Psoas muscle (tissue), 8 donors: ENCODE measurements at regions of chr11 and their contacts with region 1.

Region 1: DNA sequence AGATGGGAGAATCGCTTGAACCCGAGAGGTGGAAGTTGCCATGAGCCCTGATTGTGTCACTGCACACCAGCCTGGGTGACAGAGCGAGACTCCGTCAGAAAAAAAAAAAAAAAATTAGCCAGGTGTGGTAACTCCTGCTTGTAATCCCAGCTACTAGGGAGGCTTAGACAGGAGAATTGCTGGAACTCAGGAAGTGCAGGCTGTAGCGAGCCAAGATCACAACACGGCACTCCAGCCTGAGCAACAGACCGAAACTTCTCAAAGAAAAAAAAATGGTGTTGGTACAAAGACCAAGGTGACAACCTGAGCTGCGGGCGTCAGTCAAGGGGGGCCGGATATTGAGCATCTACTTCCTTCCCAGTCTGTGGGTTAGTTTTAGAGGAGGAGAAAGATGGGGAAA is 48.4 kb upstream of the HSPA8 start:
- DNase-seq: no peak
- ATAC-seq: no peak
- H3K4me3 ChIP-seq: no peak overlapping the region
- H3K27ac ChIP-seq: no peak overlapping the region
- H3K4me1 ChIP-seq: peaks cover 3% of the 10 kb centered on the region
- H3K27me3 ChIP-seq: no peaks in the 10 kb centered on the region
- CTCF ChIP-seq: no peak

Region 2: GRCh38 chr11:123145220-123145619 is 34.9 kb after region 1 on chr11:
- intact Hi-C with region 1: no loop called
- DNase-seq: peak; percentile 35 to 58
- ATAC-seq: peak; percentile 95 to 99 (median 97)
- H3K4me3 ChIP-seq: peak overlapping the region; percentile 31
- H3K27ac ChIP-seq: no peak overlapping the region
- H3K4me1 ChIP-seq: peaks cover 6% of the 10 kb centered on the region
- H3K27me3 ChIP-seq: no peaks in the 10 kb centered on the region
- CTCF ChIP-seq: no peak

Region 3: DNA sequence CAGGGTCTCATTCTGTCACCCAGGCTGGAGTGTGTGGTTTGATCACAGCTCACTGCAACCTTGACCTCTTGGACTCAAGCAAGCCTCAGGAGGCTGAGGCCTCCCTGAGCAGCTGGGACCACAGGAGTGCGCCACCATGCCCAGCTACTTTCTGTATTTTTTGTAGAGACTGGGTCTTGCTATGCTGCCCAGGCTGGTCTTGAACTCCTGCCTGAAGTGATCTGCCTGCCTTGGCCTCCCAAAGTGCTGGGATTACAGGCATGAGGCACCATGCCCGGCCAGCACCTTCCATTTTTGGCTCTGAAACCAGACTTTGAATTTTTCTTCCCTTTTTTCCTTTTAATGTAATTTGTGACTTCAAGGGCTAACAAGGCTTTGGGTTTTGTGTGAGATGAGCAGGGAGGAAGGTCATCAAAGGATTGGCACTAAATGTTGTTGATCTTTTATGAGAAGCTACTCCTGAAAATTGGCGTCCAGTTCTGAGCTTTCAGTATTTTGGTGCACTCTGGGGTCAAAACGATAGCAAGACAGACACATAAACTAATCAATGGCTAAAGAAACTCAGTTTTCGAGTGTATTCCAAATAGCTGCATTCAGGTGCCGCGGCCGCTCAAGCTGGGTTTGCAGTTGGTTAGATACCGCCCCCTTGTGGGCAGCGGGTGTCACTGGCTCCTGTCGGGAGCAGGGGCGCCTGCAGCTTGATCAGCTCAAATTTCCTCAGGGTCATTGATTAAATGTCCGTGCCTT is 136.6 kb after region 1 on chr11:
- intact Hi-C with region 1: loop called (anchors 1 to 2 kb)
- DNase-seq: peak; percentile 78 to 83
- ATAC-seq: peak; percentile 72 to 92 (median 77)
- H3K4me3 ChIP-seq: peak overlapping the region; percentile 23
- H3K27ac ChIP-seq: no peak overlapping the region
- H3K4me1 ChIP-seq: no peaks in the 10 kb centered on the region
- H3K27me3 ChIP-seq: no peaks in the 10 kb centered on the region
- CTCF ChIP-seq: peak; percentile 98